ENCODE measurements at regions of chr18 and their contacts with region 1.

Region 1: DNA sequence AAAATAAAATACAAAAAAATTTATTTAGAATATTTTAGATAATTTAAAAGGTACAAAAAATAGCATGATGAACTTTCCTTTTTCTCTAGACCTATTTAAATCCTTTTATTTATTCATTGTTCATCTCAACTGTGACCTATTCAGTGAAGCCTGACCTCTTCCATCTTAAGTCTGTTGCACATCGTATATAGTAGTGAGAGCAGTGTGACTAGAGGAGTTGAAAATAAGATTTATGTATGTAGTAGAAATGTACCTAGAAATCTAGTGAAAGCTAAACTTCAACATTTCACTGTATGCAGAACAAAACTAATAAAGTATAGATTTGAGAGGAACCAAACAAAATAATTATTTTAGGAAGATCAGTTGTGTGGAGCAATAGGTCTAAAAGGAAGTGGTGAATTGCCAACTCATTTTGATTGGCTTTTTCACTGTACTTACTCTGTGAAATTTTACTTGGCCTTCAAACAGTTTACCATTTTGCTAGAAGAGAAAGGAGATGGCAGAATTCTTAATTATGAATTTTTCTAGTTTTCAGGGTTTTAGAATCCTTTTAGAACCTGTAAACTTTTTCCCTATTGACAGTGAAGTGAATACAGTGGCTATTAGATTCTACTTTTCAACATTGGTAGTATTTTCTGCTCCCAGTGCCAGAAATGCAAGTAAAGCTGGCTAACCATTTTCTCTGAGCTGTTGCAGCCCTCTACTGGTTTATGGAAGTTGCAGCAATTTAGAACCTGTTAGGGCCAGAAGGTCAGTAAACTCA is 11.0 kb downstream of the ANKRD12 start:
- DNase-seq: peak in 4 of 5 donors; percentile 17 to 56 (median 54)
- H3K4me3 ChIP-seq: no peak overlapping the region
- H3K4me3 Mint-ChIP-seq: peak overlapping the region in 5 of 7 donors; percentile 7 to 37 (median 9)
- H3K27ac ChIP-seq: peak overlapping the region; percentile 13
- H3K27ac Mint-ChIP-seq: peak overlapping the region; percentile 44 to 97 (median 68)
- H3K4me1 ChIP-seq: peaks cover 78% of the 10 kb centered on the region
- H3K4me1 Mint-ChIP-seq: peaks cover 74 to 91% (median 89%) of the 10 kb centered on the region in 3 donors
- H3K27me3 ChIP-seq: no peaks in the 10 kb centered on the region
- H3K27me3 Mint-ChIP-seq: no peaks in the 10 kb centered on the region

Region 2: DNA sequence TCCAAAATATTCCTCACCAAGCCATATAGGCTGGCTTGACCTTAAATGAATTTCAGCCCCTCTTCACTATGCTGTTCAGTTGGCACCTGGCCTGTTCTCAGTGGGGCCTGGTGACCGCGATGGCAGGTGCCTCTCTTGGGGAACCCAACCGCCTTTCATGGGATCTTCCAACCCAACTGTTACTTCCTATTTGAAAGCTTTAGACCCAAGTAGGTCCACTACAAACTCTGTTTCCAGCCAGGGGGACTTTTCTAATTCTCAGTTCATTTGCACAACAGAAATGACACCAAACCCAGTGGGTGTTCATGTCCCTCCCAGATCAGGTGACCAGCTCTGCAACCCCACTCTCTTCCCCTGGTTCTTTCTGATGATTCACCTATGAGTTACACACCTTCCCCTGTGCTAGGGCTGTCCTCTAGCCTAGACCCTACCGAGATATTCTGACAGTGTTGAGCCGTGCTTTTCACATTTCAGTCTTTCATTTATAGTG is 80.8 kb before region 1 on chr18:
- CTCF ChIA-PET with region 1: interaction called, 15 read pairs
- POLR2A ChIA-PET with region 1: no interaction called
- DNase-seq: no peak
- H3K4me3 ChIP-seq: no peak overlapping the region
- H3K4me3 Mint-ChIP-seq: peak overlapping the region in 1 of 7 donors; percentile 17
- H3K27ac ChIP-seq: no peak overlapping the region
- H3K27ac Mint-ChIP-seq: peak overlapping the region in 1 of 8 donors; percentile 83
- H3K4me1 ChIP-seq: no peaks in the 10 kb centered on the region
- H3K4me1 Mint-ChIP-seq: no peaks in the 10 kb centered on the region
- H3K27me3 ChIP-seq: no peaks in the 10 kb centered on the region
- H3K27me3 Mint-ChIP-seq: peaks cover 2 to 9% of the 10 kb centered on the region in 2 donors

Region 3: GRCh38 chr18:9102508-9103375 is 44.9 kb before region 1 on chr18 and contains the start of gene NDUFV2:
- CTCF ChIA-PET with region 1: interaction called, 13 read pairs
- POLR2A ChIA-PET with region 1: interaction called, 5 read pairs
- DNase-seq: peak; percentile 95 to 98 (median 97)
- H3K4me3 ChIP-seq: peak within 1 kb of the TSS; percentile 96
- H3K4me3 Mint-ChIP-seq: peak within 1 kb of the TSS; percentile 89 to 97 (median 95)
- H3K27ac ChIP-seq: peak within 1 kb of the TSS; percentile 89
- H3K27ac Mint-ChIP-seq: peak within 1 kb of the TSS; percentile 87 to 99 (median 96)
- H3K4me1 ChIP-seq: peaks cover 42% of the 10 kb centered on the region
- H3K4me1 Mint-ChIP-seq: peaks cover 56 to 60% (median 58%) of the 10 kb centered on the region in 3 donors
- H3K27me3 ChIP-seq: no peaks in the 10 kb centered on the region
- H3K27me3 Mint-ChIP-seq: no peaks in the 10 kb centered on the region
- total RNA-seq, gene NDUFV2: 324 to 331 TPM

Measured in CD8-positive, alpha-beta memory T cell (primary cell).